ENCODE measurements at regions of chr17 and their contacts with region 1.

Region 1: GRCh38 chr17:10316801-10317542 is 55.8 kb downstream of the MYH13 start:
- DNase-seq: peak in 1 of 2 experiments; percentile 73
- H3K4me3 ChIP-seq: no peak overlapping the region
- H3K27ac ChIP-seq: no peak overlapping the region
- H3K4me1 ChIP-seq: no peaks in the 10 kb centered on the region; a peak in 1 of 7 replicates
- H3K27me3 ChIP-seq: no peaks in the 10 kb centered on the region
- CTCF ChIP-seq: peak; percentile 51 to 78 (median 74)
- EP300 ChIP-seq: no peak
- POLR2A ChIP-seq: no peak
- RAD21 ChIP-seq: peak; percentile 39 to 43

Region 2: DNA sequence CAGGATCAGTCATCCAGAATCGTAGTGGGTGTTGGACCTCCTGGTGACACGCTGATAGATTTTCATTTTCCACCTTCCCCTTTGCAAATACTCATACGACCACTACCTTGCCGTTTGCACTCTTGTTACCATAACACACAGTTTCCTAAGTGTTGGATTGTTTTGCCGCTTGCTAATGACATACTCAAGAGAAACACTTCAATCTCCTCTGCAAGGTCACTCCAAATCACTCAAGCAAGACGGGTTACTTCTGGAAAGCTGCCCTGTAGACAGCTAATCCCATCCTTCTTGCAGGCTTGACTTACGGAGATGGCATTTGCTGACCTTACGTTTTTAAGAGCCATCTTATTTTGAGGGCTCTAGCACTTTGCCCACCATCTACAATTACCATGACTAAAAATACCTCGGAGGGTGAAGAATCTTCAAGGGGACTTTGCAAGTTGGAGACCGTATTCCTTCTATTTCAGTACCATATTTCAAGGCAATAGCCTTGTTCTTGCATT is 293.9 kb after region 1 on chr17:
- CTCF ChIA-PET with region 1: interaction called, 92 read pairs
- POLR2A ChIA-PET with region 1: no interaction called
- DNase-seq: no peak
- H3K4me3 ChIP-seq: no peak overlapping the region
- H3K27ac ChIP-seq: no peak overlapping the region
- H3K4me1 ChIP-seq: no peaks in the 10 kb centered on the region; a peak in 1 of 7 replicates
- H3K27me3 ChIP-seq: no peaks in the 10 kb centered on the region
- CTCF ChIP-seq: no peak
- EP300 ChIP-seq: no peak
- POLR2A ChIP-seq: no peak
- RAD21 ChIP-seq: no peak

Measured in H1 (cell line).